GM12878 (cell line): ENCODE measurements at regions of chr10 and their contacts with region 1.

Region 1: DNA sequence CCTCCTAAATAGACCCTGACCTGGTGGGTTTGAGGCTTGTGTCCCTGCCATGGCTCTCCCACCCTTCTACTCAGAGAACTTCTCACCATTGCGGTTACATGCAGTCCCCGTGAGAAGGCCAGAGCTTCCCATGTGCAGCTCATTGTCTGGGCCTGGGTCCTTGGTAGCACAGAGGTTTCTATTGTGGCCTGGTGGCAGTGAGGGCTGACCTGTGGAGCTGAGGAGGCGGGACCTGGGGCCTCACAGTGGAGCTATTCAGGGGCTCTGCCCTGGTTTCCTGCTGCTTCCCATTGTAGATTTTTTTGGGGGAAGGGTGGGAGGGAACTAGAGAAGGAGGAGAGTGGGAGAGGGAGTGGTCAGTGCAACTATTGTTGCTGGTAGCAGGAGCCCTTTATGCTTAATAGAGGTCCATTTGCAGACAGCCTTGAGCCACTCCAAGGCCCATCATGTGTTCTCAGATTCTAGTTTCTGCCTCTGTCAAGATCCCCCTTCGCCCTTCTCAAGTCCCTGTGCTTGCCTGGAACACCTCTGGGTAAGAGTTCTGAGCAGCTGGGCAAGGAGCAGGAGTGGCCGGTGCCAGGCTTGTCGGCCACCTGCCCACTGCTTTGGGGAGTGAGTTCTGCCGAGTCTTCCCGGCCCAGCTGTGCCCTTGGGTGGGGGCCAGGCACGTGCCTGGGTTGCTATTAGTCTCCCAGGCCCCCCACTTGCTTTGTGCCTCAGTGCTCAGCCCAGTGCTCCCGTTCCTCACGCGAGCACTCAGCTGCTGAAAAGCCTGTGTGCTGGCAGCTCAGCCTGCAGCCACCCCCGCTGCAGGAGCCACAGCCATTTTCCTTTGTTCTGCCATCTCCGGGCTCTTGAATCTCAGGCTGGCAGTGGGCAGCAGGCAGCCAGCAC is 10.7 kb downstream of the TSPAN14 start:
- DNase-seq: no peak
- ATAC-seq: peak; percentile 38
- H3K4me3 ChIP-seq: peak overlapping the region; percentile 42; the same call in 1 of the 2 replicates
- H3K27ac ChIP-seq: peak overlapping the region; percentile 47
- H3K4me1 ChIP-seq: peaks cover 76% of the 10 kb centered on the region
- H3K27me3 ChIP-seq: no peaks in the 10 kb centered on the region
- CTCF ChIP-seq: no peak
- EP300 ChIP-seq: no peak
- POLR2A ChIP-seq: no peak
- RAD21 ChIP-seq: no peak

Region 2: DNA sequence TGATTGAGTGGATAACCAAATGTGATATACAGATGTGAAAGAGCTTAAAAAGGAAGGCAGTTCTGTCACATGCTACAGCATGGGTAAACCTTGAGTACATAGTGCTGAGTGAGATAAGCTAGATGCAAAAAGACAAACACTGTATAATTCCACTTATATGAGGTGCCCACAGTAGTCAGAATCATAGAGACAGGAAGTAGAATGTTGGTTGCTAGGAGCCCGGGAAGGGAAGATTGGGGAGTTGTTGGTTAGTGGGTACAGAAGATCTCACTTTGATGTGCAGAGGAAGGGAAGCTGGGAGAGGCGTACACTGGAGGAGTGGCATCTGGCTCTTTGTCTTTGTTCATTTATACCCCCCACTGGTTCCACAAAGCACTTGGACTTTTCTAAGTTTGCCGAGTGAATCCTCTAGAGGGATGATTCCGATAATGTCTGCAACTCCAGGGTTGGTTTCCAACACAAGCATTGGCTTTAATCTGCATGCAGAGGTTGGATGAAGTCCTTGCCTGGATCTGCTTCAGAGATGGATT is 28.8 kb after region 1 on chr10:
- CTCF ChIA-PET with region 1: interaction called, 402 read pairs
- POLR2A ChIA-PET with region 1: interaction called, 60 read pairs
- RAD21 ChIA-PET with region 1: interaction called, 412 read pairs
- SMC1A ChIA-PET with region 1: interaction called, 1,038 read pairs
- in situ Hi-C with region 1: no loop called
- intact Hi-C with region 1: no loop called
- DNase-seq: no peak
- ATAC-seq: peak; percentile 75
- H3K4me3 ChIP-seq: peak overlapping the region; percentile 15; the same call in 1 of the 2 replicates
- H3K27ac ChIP-seq: peak overlapping the region; percentile 47
- H3K4me1 ChIP-seq: peaks cover 26% of the 10 kb centered on the region
- H3K27me3 ChIP-seq: no peaks in the 10 kb centered on the region
- CTCF ChIP-seq: no peak
- EP300 ChIP-seq: no peak
- POLR2A ChIP-seq: no peak
- RAD21 ChIP-seq: no peak

Region 3: DNA sequence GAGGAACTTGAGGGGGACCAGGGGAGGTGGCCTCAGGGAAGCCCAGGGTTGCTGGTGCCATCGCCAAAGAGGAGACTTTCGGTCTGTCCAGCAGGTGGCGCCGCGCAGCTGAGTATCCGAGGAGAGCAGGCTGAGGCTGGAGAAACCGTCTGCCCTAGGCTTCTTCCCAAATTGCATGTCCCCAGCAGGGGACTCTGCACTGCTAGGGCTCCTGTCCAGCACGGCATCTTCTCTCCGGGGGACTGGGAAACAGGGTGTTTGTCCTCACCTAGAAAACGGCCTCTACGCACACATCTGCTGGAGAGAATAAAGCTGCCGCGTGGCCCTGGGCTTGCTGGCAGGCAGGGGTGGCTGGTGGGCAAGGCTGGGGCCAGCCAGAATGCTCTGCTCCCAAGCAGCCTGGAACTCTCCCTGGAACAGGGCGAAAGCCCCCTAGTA is 234.8 kb after region 1 on chr10:
- CTCF ChIA-PET with region 1: no interaction called
- POLR2A ChIA-PET with region 1: no interaction called
- RAD21 ChIA-PET with region 1: no interaction called
- SMC1A ChIA-PET with region 1: no interaction called
- in situ Hi-C with region 1: no loop called
- intact Hi-C with region 1: no loop called
- DNase-seq: no peak
- ATAC-seq: peak; percentile 96
- H3K4me3 ChIP-seq: no peak overlapping the region
- H3K27ac ChIP-seq: no peak overlapping the region
- H3K4me1 ChIP-seq: no peaks in the 10 kb centered on the region; the same call in 1 of the 2 replicates
- H3K27me3 ChIP-seq: no peaks in the 10 kb centered on the region
- CTCF ChIP-seq: peak; percentile 88 to 92 (median 90)
- EP300 ChIP-seq: no peak
- POLR2A ChIP-seq: no peak
- RAD21 ChIP-seq: peak; percentile 88